Activated B cell treated with CpG ODN at 0.5 μM for 24 hours (primary cell): ENCODE measurements at regions of chr22 and their contacts with region 1.

Region 1: DNA sequence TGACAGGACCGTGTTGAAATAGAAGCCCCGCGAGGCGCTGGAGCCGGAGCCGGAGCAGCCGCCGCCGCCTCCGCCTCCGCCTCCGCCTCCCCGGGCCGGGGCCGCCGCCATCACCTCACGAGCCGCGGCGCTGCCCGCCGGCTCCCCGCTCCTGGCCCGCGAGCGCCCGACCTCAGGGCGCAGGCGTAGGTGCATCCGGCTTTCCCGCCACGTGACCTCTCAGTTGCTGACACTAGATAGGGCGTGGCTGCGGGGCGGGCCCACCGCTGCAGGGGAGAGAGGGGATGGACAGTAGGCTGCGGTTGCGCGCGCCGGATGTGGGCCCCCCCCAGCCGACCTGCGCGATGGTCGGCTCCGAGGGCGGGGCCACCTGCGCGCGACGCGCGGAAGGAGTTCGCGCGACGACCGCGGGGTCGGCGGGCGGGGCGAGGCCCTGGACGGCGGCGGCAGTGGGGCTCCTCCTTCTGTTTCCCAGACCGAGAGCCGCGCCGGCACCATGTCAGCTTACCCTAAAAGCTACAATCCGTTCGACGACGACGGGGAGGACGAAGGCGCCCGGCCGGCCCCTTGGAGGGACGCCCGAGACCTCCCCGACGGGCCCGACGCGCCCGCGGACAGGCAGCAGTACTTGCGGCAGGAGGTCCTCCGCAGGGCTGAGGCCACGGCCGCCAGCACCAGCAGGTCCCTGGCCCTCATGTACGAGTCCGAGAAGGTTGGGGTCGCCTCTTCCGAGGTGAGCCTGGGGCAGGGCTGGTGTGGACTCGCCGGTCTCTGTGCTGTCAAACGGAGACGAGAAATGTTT is at the starts of genes PI4KA and SNAP29:
- DNase-seq: peak; percentile 97
- ATAC-seq: peak; percentile 93
- H3K4me3 Mint-ChIP-seq: peak within 1 kb of the TSS; percentile 89
- H3K27ac Mint-ChIP-seq: peak within 1 kb of the TSS; percentile 80
- H3K4me1 Mint-ChIP-seq: peaks cover 46% of the 10 kb centered on the region
- H3K27me3 Mint-ChIP-seq: no peaks in the 10 kb centered on the region
- CTCF ChIP-seq: no peak
- total RNA-seq, gene PI4KA: 101 and 114 TPM in 2 replicates
- total RNA-seq, gene SNAP29: 22.1 and 23.6 TPM in 2 replicates

Region 2: GRCh38 chr22:20393909-20394691 is 464.7 kb before region 1 on chr22 and contains the start of gene ZNF74:
- CTCF ChIA-PET with region 1: no interaction called
- POLR2A ChIA-PET with region 1: no interaction called
- intact Hi-C with region 1: loop called (anchors 2 kb)
- DNase-seq: peak; percentile 69
- ATAC-seq: peak; percentile 94
- H3K4me3 Mint-ChIP-seq: peak within 1 kb of the TSS; percentile 92
- H3K27ac Mint-ChIP-seq: peak within 1 kb of the TSS; percentile 86
- H3K4me1 Mint-ChIP-seq: peaks cover 33% of the 10 kb centered on the region
- H3K27me3 Mint-ChIP-seq: no peaks in the 10 kb centered on the region
- CTCF ChIP-seq: no peak
- total RNA-seq, gene ZNF74: 4.3 and 4.9 TPM in 2 replicates